ENCODE measurements at regions of chr3 and their contacts with region 1.

Region 1: DNA sequence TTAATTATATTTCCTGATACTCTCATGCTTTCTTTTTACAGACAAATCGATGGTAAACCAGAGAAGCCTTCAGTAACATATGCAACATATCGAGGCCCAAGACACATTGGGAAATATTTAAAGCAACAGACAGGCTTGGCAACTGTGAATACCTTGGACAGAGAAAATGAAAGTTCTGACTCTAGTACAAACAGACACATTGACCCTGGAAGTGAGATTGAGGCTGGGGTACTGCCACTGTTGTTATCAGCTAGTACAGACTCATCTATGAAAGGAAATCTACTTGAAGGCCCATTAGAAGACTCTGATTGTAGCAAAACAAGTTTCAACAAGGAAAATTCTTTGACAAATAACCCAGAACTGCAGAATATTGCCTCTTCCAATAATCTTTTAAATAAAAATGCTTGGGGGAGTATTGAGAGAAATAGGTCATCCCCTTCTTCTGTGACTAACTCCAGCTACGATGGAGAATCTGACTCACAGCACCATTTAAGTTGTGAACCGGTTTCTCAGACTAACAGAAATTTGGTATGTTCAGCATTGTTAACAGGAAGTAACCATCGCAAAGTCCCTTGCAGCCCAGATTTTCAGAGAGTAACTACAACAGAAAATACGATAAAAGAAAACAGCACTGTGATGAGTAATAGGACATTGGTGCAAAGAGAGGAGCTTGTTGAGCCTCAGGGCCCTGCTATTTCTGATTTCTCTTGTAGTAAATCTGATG is 50.2 kb downstream of the CRYBG3 start:
- DNase-seq: peak; percentile 20
- H3K4me3 Mint-ChIP-seq: peak overlapping the region; percentile 22
- H3K27ac Mint-ChIP-seq: peak overlapping the region; percentile 82
- H3K4me1 Mint-ChIP-seq: peaks cover 22% of the 10 kb centered on the region
- H3K27me3 Mint-ChIP-seq: no peaks in the 10 kb centered on the region

Region 2: GRCh38 chr3:97882975-97883598 is 11.1 kb after region 1 on chr3:
- intact Hi-C with region 1: loop called (anchors 1 kb)
- DNase-seq: no peak
- H3K4me3 Mint-ChIP-seq: no peak overlapping the region
- H3K27ac Mint-ChIP-seq: peak overlapping the region; percentile 43
- H3K4me1 Mint-ChIP-seq: peaks cover 18% of the 10 kb centered on the region
- H3K27me3 Mint-ChIP-seq: no peaks in the 10 kb centered on the region

Region 3: GRCh38 chr3:97981886-97982285 is 109.9 kb after region 1 on chr3:
- intact Hi-C with region 1: loop called (anchors 5 kb)
- DNase-seq: no peak
- H3K4me3 Mint-ChIP-seq: peak overlapping the region; percentile 1
- H3K27ac Mint-ChIP-seq: peak overlapping the region; percentile 70
- H3K4me1 Mint-ChIP-seq: peaks cover 27% of the 10 kb centered on the region
- H3K27me3 Mint-ChIP-seq: no peaks in the 10 kb centered on the region